ENCODE measurements at regions of chr16 and their contacts with region 1.

Region 1: DNA sequence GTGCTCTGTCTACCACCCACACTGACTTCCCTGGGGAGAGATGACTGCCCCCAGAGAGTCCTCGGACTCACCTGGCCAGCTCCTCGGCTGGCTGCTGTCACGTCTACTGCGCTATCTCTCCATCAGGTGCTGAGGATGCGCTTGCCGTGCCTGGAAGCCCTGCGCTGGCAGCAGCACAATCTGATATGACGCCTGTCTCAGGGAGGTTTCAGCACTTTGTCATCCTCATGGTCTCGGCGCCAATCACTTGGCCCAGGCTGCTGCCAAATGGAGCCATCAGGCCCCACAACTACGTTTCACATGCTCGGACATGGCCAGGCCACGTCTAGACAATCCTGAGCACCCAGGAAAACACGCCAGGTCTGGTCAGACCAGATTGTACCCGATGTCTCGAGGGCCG is 46.7 kb downstream of the FOXL1 start:
- DNase-seq: peak; percentile 77
- H3K4me3 ChIP-seq: no peak overlapping the region
- H3K27ac ChIP-seq: peak overlapping the region; percentile 49
- H3K4me1 ChIP-seq: peaks cover 18% of the 10 kb centered on the region
- H3K27me3 ChIP-seq: no peaks in the 10 kb centered on the region
- CTCF ChIP-seq: no peak

Region 2: GRCh38 chr16:86653285-86654006 is 28.4 kb after region 1 on chr16:
- CTCF ChIA-PET with region 1: no interaction called
- dilution Hi-C with region 1: no loop called
- in situ Hi-C with region 1: no loop called
- intact Hi-C with region 1: no loop called
- DNase-seq: no peak
- H3K4me3 ChIP-seq: no peak overlapping the region
- H3K27ac ChIP-seq: no peak overlapping the region
- H3K4me1 ChIP-seq: no peaks in the 10 kb centered on the region
- H3K27me3 ChIP-seq: no peaks in the 10 kb centered on the region
- CTCF ChIP-seq: no peak

Region 3: DNA sequence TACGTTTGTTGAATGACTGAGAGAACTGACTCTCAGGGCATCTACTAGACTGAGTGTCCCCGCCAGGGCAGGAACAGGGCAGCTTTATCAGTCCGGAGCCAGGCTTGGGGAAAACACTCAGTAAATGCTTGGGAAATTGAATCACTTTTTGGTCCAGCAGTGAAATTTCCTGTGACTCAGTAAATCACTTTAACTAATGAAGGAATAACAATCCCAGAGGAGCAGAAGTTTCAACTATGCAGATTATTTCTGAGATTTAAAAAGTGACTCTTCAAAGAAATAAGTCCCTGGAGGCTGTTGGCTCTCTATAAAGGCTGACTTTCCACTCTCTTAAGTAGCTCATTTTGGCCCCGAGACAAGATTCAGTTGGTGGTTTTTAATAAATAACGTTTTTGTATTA is 55.1 kb after region 1 on chr16:
- CTCF ChIA-PET with region 1: no interaction called
- dilution Hi-C with region 1: no loop called
- in situ Hi-C with region 1: no loop called
- intact Hi-C with region 1: loop called (anchors 2 kb)
- DNase-seq: peak; percentile 77
- H3K4me3 ChIP-seq: no peak overlapping the region
- H3K27ac ChIP-seq: no peak overlapping the region
- H3K4me1 ChIP-seq: peaks cover 32% of the 10 kb centered on the region
- H3K27me3 ChIP-seq: no peaks in the 10 kb centered on the region
- CTCF ChIP-seq: no peak

Measured in mammary epithelial cell (primary cell).